ENCODE measurements at regions of chr4 and their contacts with region 1.

Region 1: GRCh38 chr4:54233277-54233696 is 4.2 kb downstream of the PDGFRA start:
- DNase-seq: peak; percentile 91
- CTCF ChIP-seq: peak; percentile 90

Region 2: DNA sequence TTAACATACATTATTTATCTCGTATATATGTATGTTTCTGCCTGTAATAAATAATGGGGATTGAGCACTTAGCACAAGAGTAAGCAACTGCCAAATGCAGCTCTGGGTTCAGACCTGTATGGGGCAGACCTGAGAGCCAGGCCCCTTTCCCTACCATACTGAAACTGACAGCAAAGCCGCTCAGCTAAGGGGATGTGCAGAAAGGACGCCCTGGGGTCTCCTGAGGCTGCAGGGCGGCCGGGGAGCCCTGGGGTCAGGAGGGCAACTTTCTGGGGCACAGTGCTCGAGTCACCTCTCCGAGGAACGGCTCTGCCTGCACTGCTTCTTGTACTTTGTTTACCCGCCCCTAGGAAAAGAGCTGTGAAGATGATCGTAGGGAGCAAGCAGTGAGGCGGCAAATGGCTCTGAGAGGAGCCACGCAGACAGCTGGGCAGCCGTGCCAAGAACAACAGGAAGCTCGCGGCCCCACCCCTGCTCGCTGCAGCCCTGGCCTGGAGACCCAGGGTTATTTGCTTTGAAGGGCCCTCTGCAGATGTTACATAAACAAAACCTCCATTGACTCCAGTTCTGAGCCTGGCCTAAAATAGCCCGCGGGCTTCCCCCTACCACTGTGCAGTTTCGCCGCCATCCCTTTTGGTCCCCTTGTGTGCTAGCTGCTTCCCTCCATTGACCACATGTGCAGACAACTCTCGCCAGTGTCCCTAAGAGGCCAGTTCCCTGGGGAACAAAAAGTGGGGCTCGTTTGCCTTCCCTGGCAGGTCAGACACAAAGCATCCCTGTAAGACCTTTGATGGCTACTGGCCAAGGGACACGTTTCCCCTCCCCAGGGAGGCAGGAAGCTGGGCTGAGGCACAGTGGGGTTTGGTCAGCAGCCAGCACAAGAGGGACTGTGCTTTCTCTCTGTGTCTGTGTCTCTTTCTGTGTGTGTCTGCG is 530.7 kb before region 1 on chr4:
- in situ Hi-C with region 1: loop called (anchors 25 kb)
- DNase-seq: peak; percentile 31
- CTCF ChIP-seq: peak; percentile 31